Dorsolateral prefrontal cortex (tissue), 120 donors: ENCODE measurements at regions of chr2 and their contacts with region 1.

Region 1: DNA sequence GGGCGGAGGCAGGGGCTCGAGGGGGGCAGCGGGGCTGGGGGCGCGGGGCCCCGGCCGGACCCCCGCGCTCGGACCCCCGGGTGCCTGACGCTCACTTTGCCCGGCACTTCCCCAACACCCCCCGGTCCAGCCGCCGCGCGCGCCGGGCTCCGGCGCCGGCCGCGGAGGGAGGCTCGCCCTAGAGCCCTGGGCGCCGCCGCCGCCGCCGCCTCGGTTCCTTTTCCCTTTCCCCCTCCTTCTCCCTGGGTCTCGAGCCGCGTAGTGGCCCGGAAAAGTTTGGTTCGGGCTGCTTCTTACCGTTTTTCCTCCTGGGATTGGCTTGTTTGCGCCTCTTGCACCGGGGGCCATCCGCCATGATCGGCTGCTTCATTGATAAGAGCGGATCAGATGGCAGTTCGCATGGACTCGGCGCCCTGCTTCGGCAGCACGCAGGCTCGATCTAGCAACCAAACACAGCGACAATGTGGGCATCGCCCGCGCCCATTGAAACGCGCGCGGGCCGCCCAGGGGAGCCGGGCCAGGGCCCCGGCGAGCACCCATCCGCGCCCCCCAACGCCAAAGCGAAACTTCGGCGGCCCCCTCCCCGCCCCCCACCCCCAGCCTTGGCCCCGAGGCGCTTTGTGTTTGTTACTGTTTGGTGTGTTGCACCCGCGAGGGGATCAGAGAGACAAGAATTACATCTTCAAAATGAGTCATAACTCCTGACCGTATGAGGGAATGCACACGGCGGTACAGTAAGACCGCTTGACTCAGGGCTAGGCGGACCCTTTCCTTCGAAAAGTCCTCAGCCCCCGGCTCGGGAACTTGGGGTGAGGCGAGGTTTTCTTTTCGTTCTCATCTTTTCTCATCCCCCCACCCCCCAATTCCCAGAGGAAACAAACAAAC is 2.7 kb downstream of the ZEB2 start:
- DNase-seq: peak in 4 of 10 donors; percentile 40 to 69 (median 61)
- H3K4me3 ChIP-seq: peak overlapping the region; percentile 57 to 100 (median 85)
- H3K27ac ChIP-seq: peak overlapping the region; percentile 95 to 100 (median 100)
- H3K27me3 ChIP-seq: no peaks in the 10 kb centered on the region
- CTCF ChIP-seq: peak in 3 of 56 donors; percentile 11 to 12 (median 11)

Region 2: GRCh38 chr2:143575340-143575739 is 941.9 kb before region 1 on chr2:
- intact Hi-C with region 1: loop called in 1 of 2 experiments (anchors 10 kb)
- DNase-seq: no peak
- H3K4me3 ChIP-seq: no peak overlapping the region
- H3K27ac ChIP-seq: no peak overlapping the region
- H3K27me3 ChIP-seq: no peaks in the 10 kb centered on the region
- CTCF ChIP-seq: peak in 49 of 56 donors; percentile 18 to 65 (median 45)

Region 3: GRCh38 chr2:144004742-144005141 is 512.5 kb before region 1 on chr2:
- intact Hi-C with region 1: no loop called
- DNase-seq: peak in 1 of 10 donors; percentile 2
- H3K4me3 ChIP-seq: no peak overlapping the region
- H3K27ac ChIP-seq: peak overlapping the region in 9 of 59 donors; percentile 0 to 47 (median 16)
- H3K27me3 ChIP-seq: no peaks in the 10 kb centered on the region
- CTCF ChIP-seq: no peak

Region 4: DNA sequence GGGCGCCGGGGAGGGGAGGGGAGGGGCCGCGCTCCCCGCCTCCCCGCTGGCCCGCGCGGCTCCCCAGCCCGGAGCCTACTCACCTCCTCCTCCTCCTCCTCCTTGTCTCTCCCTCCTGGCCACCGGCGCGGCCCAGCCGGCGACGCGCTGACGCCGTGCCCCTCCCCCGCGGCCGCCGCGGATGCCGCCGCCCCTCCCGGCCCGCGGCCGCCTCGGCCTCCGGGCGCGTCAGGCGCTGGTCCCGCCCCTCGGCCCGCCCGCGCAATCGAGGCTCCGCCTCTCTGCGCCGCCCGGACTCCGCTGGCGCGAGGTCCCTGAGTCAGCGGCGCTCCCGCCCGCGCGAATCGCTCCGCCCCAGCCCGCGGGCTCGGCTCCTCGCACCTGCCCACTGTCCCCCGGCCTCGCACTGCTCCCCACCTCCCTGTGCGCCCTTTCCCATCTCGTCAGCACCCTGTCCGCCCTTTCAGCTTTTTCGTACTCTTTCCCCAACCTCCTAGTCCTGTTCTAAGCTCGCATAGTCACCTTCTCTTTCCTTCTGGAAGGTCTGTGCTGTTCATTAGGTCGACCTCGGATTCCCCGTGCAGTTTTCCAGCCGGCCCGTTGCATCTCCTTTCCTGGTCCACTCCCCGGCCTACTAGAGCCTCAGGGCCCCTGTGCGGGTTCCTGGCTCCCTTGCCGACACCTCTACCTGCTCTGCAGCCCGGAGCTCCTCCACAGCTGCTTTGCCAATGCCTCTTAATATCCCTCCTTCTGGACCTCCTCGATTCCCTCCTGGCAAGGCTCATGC is 184.7 kb before region 1 on chr2:
- intact Hi-C with region 1: loop called (anchors 2 to 5 kb)
- DNase-seq: peak; percentile 73 to 95 (median 84)
- H3K4me3 ChIP-seq: peak overlapping the region; percentile 57 to 93 (median 85)
- H3K27ac ChIP-seq: peak overlapping the region; percentile 22 to 98 (median 95)
- H3K27me3 ChIP-seq: no peaks in the 10 kb centered on the region
- CTCF ChIP-seq: no peak

Region 5: DNA sequence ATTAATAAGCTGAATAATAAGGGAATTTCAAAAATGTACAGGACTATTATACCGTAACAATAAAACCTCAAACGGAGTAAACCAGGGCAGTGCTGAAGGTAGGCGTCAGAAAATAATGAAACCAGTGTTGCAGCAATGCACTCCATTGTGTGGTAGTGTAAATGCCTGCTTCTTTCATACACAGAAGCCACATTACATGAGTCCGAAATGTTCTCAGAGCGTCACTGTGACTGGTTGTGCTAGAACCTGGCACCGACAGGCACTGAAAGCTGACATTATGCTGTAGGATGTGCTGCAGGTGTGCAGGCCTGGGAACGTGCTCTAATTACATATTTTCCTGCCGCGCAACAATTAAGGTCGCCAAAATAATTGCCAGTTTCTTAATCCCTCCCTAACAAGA is 50.6 kb before region 1 on chr2:
- intact Hi-C with region 1: loop called in 1 of 2 experiments (anchors 2 kb)
- DNase-seq: peak in 7 of 10 donors; percentile 66 to 90 (median 78)
- H3K4me3 ChIP-seq: peak overlapping the region in 35 of 59 donors; percentile 0 to 44 (median 25)
- H3K27ac ChIP-seq: peak overlapping the region; percentile 69 to 99 (median 97)
- H3K27me3 ChIP-seq: no peaks in the 10 kb centered on the region
- CTCF ChIP-seq: peak in 6 of 56 donors; percentile 8 to 32 (median 10)

Region 6: DNA sequence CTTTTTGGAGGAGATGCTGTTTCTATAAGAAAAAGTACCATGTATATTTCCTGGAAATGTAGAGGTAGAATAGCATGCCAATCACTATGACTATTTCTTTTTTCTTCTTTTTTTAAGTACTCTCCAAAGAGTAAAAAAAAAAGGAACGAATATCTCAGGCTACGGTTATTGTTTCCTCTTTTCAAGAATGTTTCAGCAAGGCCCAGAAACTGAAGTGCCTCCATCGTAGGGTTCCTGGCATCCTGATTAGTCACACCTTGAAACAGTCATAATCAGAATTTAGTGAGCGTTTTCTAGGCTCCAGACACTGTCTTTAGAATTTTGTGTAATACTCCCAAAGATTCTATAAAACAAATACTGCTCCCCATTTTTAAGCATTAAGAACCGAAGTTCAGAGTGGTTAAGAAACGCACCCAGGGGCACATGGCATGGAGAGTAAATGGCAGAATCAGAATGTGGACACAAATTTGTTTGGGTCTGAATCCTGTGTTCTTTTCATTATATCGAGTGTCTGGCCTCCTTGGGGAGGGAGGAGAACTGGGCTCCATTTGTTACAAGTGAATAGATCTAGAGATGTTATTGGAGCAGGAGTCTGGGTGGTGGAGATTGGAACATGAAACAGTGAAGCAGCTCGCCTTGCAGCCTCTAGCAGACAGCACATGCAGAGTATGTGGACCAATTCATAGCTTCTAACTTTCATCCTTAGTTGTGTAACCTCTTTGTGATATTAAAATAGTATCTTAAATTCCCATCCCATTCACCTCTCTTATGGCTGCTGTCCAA is 24.0 kb before region 1 on chr2:
- intact Hi-C with region 1: no loop called
- DNase-seq: no peak
- H3K4me3 ChIP-seq: peak overlapping the region in 6 of 59 donors; percentile 7 to 33 (median 16)
- H3K27ac ChIP-seq: peak overlapping the region; percentile 50 to 98 (median 90)
- H3K27me3 ChIP-seq: no peaks in the 10 kb centered on the region
- CTCF ChIP-seq: no peak

Region 7: GRCh38 chr2:144770616-144771230 is 253.5 kb after region 1 on chr2:
- intact Hi-C with region 1: loop called in 1 of 2 experiments (anchors 10 kb)
- DNase-seq: no peak
- H3K4me3 ChIP-seq: peak overlapping the region in 46 of 59 donors; percentile 2 to 55 (median 28)
- H3K27ac ChIP-seq: peak overlapping the region in 5 of 59 donors; percentile 2 to 31 (median 21)
- H3K27me3 ChIP-seq: peaks cover 0 to 6% (median 0%) of the 10 kb centered on the region in 45 donors
- CTCF ChIP-seq: no peak

Region 8: GRCh38 chr2:145186303-145186702 is 669.1 kb after region 1 on chr2:
- intact Hi-C with region 1: loop called in 1 of 2 experiments (anchors 10 kb)
- DNase-seq: peak in 1 of 10 donors; percentile 28
- H3K4me3 ChIP-seq: no peak overlapping the region
- H3K27ac ChIP-seq: no peak overlapping the region
- H3K27me3 ChIP-seq: no peaks in the 10 kb centered on the region
- CTCF ChIP-seq: peak in 38 of 56 donors; percentile 11 to 63 (median 34)